PC-3 (cell line): ENCODE measurements at regions of chr2 and their contacts with region 1.

Region 1: DNA sequence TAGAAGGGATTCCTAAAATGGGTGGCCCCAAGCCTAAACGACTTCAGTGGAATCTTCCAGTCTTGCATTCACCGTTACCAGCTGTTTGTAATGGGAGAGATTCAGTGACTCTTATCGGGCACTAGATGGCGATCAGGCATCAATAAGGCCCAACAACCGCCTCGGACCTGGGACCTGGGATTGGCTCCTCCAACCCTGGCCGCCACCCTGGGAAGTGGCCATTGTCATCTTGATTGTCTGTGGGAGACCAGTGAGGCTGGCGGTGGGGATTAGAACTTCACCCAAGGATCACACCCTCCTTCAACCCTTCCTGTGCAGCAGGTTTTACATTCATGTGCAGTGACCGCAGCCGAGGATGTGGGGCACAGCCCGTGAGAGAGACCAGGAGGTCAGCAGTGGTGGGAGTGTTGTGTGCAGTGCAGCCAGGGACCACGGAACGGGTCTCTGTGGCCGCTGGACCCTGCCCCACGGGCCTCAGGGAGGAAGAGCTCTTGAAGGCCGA is 85.3 kb downstream of the SPP2 start:
- DNase-seq: peak; percentile 82
- ATAC-seq: peak; percentile 74
- H3K4me3 ChIP-seq: no peak overlapping the region
- H3K27ac ChIP-seq: peak overlapping the region; percentile 48
- H3K4me1 ChIP-seq: peaks cover 46% of the 10 kb centered on the region
- H3K27me3 ChIP-seq: no peaks in the 10 kb centered on the region
- CTCF ChIP-seq: peak; percentile 91

Region 2: GRCh38 chr2:234051374-234052070 is 84.2 kb before region 1 on chr2:
- CTCF ChIA-PET with region 1: no interaction called
- POLR2A ChIA-PET with region 1: no interaction called
- intact Hi-C with region 1: no loop called
- DNase-seq: peak; percentile 23
- ATAC-seq: no peak
- H3K4me3 ChIP-seq: no peak overlapping the region
- H3K27ac ChIP-seq: no peak overlapping the region
- H3K4me1 ChIP-seq: no peaks in the 10 kb centered on the region
- H3K27me3 ChIP-seq: no peaks in the 10 kb centered on the region
- CTCF ChIP-seq: no peak

Region 3: DNA sequence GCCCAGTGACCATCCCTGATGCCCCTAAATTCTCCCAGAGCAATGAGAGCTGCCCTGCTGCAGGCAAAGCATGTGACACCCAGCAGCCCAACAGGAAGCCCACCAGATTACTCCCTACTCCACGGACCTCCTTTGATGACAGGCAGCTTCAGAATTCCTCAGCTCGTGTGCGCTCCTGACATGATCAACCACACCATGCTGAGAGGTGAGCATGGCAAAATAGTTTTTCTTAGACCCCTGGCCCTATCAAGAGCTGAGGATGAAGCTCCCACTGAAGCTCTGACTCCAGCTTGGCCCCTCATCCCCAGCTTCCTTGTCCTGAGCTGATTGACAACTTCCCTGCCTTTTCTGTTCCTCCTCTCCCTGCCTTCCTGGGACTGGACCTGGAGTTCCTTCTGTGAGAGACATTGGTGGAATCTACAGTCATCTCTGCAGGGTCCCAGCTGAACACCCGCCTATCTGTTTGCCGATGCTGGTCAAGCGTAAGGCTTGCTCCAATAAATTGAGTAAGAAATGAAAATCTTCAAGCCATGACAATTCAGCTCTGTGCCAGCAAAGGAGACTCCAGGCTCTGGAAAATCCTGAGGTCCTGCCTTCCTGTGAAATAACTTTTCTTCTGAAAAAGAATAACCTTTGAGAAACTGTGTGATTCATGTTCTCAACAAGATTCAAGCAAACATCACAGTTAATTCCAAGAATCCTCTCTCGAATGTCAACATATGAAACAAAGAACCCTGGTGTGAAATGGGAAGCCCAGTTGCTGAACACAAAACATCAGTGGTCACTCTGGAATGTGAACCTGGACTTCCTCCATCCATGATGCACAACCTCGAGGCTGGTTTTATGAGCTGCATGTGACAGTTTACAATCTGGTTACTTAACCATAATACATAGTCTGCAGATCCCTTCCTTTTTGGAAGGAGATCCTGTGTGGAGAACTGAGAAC is 115.8 kb after region 1 on chr2:
- CTCF ChIA-PET with region 1: interaction called, 3 read pairs
- POLR2A ChIA-PET with region 1: no interaction called
- intact Hi-C with region 1: loop called (anchors 2 kb)
- DNase-seq: peak; percentile 97
- ATAC-seq: peak; percentile 74
- H3K4me3 ChIP-seq: peak overlapping the region; percentile 7; the same call in 1 of the 2 replicates
- H3K27ac ChIP-seq: peak overlapping the region; percentile 91
- H3K4me1 ChIP-seq: peaks cover 60% of the 10 kb centered on the region
- H3K27me3 ChIP-seq: no peaks in the 10 kb centered on the region
- CTCF ChIP-seq: no peak

Region 4: GRCh38 chr2:234308813-234309195 is 173.0 kb after region 1 on chr2:
- CTCF ChIA-PET with region 1: no interaction called
- POLR2A ChIA-PET with region 1: no interaction called
- intact Hi-C with region 1: loop called (anchors 2 kb)
- DNase-seq: peak; percentile 92
- ATAC-seq: peak; percentile 90
- H3K4me3 ChIP-seq: no peak overlapping the region
- H3K27ac ChIP-seq: peak overlapping the region; percentile 98
- H3K4me1 ChIP-seq: peaks cover 40% of the 10 kb centered on the region
- H3K27me3 ChIP-seq: no peaks in the 10 kb centered on the region
- CTCF ChIP-seq: no peak

Region 5: DNA sequence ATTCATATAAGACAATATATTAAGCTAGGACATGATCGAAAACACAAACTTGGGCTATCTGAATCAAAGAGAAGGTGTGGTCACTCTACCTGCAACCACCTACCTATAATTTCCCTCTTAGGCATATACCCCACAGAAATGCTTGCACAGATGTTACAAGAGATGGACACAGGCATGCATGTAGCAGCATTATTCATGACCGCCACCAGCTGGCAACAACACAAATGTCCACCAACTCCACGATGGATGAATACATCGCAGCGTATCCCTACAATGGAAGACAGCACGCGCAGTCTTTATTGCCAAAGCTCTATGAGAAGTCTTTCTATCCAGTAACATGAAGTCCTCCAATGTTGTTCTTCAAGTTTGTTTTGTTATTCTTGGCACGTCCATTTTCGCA is 270.3 kb after region 1 on chr2:
- CTCF ChIA-PET with region 1: no interaction called
- POLR2A ChIA-PET with region 1: no interaction called
- intact Hi-C with region 1: loop called (anchors 5 kb)
- DNase-seq: peak; percentile 25
- ATAC-seq: peak; percentile 58; the same call in 1 of the 2 replicates
- H3K4me3 ChIP-seq: no peak overlapping the region
- H3K27ac ChIP-seq: no peak overlapping the region
- H3K4me1 ChIP-seq: 0 out of 2 replicates have a peak, but pooled peaks cover 6% of the 10 kb centered on the region
- H3K27me3 ChIP-seq: no peaks in the 10 kb centered on the region
- CTCF ChIP-seq: peak; percentile 53

Region 6: DNA sequence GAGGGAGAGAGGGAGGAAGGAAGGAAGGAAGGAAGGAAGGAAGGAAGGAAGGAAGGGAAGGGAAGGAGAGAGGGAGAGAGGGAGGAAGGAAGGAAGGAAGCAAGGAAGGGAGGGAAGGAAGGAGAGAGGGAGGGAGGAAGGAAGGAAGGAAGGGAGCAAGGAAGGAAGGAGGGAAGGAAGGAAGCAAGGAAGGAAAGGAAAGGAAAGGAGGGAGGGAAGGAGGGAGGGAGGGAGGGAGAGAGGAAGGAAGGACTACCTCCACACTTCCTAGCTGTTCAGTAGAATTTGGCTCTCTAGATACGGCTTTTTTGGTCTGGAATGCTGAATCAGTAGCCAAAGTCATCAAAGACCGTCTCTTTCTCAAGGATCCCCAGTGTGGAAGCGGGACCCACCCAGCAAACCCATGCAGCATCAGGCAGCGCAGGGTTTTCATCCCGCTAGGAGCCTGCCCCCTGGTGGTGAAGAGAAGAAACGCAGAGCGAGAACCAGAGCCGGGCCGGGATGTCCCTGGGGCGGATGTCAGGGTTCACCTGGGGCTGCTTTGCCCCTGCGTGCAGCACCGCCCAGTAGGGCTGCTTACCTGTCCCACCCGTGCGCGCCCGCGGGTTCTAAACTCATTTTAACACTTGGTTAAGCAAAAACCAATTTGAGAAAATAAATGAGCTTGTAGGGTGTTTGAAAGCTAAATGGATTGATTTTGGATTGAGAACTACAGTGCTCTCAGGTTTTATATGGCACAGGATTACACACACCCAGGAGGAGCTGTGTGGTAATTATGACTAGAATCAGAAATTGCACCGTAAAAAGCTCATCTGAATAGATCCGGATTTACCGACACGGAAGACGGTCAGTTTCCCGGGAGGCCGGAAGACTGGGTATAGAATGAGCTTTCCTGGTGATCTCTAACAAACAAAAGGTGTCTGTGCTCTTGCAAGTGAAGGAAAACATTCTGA is 409.2 kb after region 1 on chr2:
- CTCF ChIA-PET with region 1: no interaction called
- POLR2A ChIA-PET with region 1: no interaction called
- intact Hi-C with region 1: loop called (anchors 5 kb)
- DNase-seq: peak; percentile 78
- ATAC-seq: peak; percentile 91
- H3K4me3 ChIP-seq: no peak overlapping the region
- H3K27ac ChIP-seq: no peak overlapping the region
- H3K4me1 ChIP-seq: peaks cover 5% of the 10 kb centered on the region; the same call in 1 of the 2 replicates
- H3K27me3 ChIP-seq: no peaks in the 10 kb centered on the region
- CTCF ChIP-seq: peak; percentile 86